IMR-90 (cell line): ENCODE measurements at regions of chrX and their contacts with region 1.

Region 1: GRCh38 chrX:139518475-139518874 is 12.1 kb upstream of the F9 start:
- DNase-seq: no peak
- ATAC-seq: no peak
- H3K4me3 ChIP-seq: no peak overlapping the region
- H3K27ac ChIP-seq: no peak overlapping the region
- H3K4me1 ChIP-seq: no peaks in the 10 kb centered on the region
- H3K27me3 ChIP-seq: no peaks in the 10 kb centered on the region
- CTCF ChIP-seq: no peak
- POLR2A ChIP-seq: no peak
- RAD21 ChIP-seq: no peak

Region 2: GRCh38 chrX:139475432-139475831 is 43.0 kb before region 1 on chrX:
- CTCF ChIA-PET with region 1: no interaction called
- POLR2A ChIA-PET with region 1: no interaction called
- dilution Hi-C with region 1: no loop called
- in situ Hi-C with region 1: no loop called
- intact Hi-C with region 1: no loop called
- DNase-seq: no peak
- ATAC-seq: no peak
- H3K4me3 ChIP-seq: no peak overlapping the region
- H3K27ac ChIP-seq: no peak overlapping the region
- H3K4me1 ChIP-seq: no peaks in the 10 kb centered on the region
- H3K27me3 ChIP-seq: no peaks in the 10 kb centered on the region
- CTCF ChIP-seq: no peak
- POLR2A ChIP-seq: no peak
- RAD21 ChIP-seq: no peak

Region 3: GRCh38 chrX:139532834-139533233 is 14.4 kb after region 1 on chrX:
- CTCF ChIA-PET with region 1: no interaction called
- POLR2A ChIA-PET with region 1: no interaction called
- dilution Hi-C with region 1: no loop called
- in situ Hi-C with region 1: no loop called
- intact Hi-C with region 1: no loop called
- DNase-seq: no peak
- ATAC-seq: no peak
- H3K4me3 ChIP-seq: no peak overlapping the region
- H3K27ac ChIP-seq: no peak overlapping the region
- H3K4me1 ChIP-seq: no peaks in the 10 kb centered on the region
- H3K27me3 ChIP-seq: no peaks in the 10 kb centered on the region
- CTCF ChIP-seq: no peak
- POLR2A ChIP-seq: no peak
- RAD21 ChIP-seq: no peak

Region 4: DNA sequence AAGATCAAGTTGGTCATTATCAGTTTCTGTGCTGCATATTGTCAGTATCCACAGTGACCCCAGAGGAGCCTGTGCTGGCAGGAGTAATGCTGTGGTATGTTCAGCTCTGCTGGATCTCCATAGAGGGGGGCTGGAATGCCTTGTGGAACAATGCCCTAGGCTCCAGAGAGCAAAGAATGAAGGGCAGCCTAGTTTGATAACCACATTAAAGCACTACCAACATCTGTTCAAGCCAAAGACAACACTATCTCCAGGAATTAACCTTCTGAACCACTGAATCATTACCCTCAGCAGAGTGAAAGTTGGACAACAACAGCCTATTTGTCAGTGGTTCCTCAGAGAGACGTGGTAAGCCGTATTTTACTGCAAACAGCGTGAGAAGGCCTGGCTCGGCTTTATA is 639.1 kb after region 1 on chrX:
- CTCF ChIA-PET with region 1: no interaction called
- POLR2A ChIA-PET with region 1: interaction called, 13 read pairs
- dilution Hi-C with region 1: no loop called
- in situ Hi-C with region 1: no loop called
- intact Hi-C with region 1: no loop called
- DNase-seq: peak; percentile 8
- ATAC-seq: no peak
- H3K4me3 ChIP-seq: no peak overlapping the region
- H3K27ac ChIP-seq: no peak overlapping the region
- H3K4me1 ChIP-seq: no peaks in the 10 kb centered on the region
- H3K27me3 ChIP-seq: no peaks in the 10 kb centered on the region
- CTCF ChIP-seq: no peak
- POLR2A ChIP-seq: no peak
- RAD21 ChIP-seq: no peak